HCT116 (cell line): ENCODE measurements at regions of chr22 and their contacts with region 1.

Region 1: GRCh38 chr22:37933711-37934376 is 19.6 kb downstream of the C22orf23 start:
- DNase-seq: peak; percentile 83
- ATAC-seq: peak; percentile 96
- H3K4me3 ChIP-seq: peak overlapping the region in 1 of 2 experiments; percentile 9; a peak in 1 of 4 replicates
- H3K27ac ChIP-seq: peak overlapping the region; percentile 78
- H3K4me1 ChIP-seq: peaks cover 13 to 18% of the 10 kb centered on the region in 2 experiments
- H3K27me3 ChIP-seq: no peaks in the 10 kb centered on the region
- CTCF ChIP-seq: peak; percentile 95 to 99 (median 97)
- POLR2A ChIP-seq: no peak
- RAD21 ChIP-seq: peak; percentile 78

Region 2: DNA sequence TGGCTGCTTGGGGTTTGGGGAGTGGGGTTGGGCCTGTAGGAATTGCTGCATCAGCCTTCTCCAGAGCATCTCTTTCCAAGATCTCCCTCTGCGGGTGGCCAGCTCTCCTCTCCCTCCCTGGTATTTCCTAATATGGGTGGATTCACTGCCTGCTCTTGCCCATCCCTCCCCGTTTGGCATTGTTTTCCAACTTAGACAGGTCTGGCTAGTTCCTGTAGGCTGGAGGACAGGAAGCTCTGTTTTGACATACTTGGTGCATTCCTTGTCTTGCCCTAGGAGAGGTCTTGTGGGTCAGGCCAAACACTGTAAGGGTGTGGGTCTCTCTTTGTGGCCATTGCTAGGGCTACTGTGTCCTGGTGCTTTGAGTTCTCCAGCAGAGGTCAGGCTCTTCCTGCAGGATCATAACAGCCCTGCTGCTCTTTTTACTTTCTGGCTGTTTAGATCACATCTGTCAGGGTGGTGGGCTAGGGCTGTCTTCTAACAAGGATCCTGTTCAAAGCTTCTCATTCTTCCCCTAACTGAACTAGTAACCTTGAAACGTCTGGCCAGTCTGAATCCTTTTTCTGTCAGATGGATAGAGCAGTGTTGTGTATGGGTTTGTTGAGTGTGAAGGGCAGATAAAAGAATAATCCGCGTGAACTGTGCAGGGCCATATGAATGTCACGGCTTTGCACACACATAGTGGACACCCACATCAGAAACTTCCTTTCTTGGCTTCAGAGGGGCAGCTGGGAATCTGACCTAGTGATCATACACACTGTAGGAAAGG is 46.0 kb before region 1 on chr22:
- CTCF ChIA-PET with region 1: interaction called, 3 read pairs
- POLR2A ChIA-PET with region 1: no interaction called
- RAD21 ChIA-PET with region 1: no interaction called
- intact Hi-C with region 1: loop called (anchors 10 kb)
- DNase-seq: no peak
- ATAC-seq: peak; percentile 58; the same call in 1 of the 2 replicates
- H3K4me3 ChIP-seq: no peak overlapping the region
- H3K27ac ChIP-seq: no peak overlapping the region
- H3K4me1 ChIP-seq: peaks cover under 1 to 4% of the 10 kb centered on the region in 2 experiments; a peak in 1 of 4 replicates
- H3K27me3 ChIP-seq: no peaks in the 10 kb centered on the region
- CTCF ChIP-seq: peak; percentile 39 to 44 (median 42); a peak in 5 of 6 replicates
- POLR2A ChIP-seq: no peak
- RAD21 ChIP-seq: peak; percentile 64

Region 3: DNA sequence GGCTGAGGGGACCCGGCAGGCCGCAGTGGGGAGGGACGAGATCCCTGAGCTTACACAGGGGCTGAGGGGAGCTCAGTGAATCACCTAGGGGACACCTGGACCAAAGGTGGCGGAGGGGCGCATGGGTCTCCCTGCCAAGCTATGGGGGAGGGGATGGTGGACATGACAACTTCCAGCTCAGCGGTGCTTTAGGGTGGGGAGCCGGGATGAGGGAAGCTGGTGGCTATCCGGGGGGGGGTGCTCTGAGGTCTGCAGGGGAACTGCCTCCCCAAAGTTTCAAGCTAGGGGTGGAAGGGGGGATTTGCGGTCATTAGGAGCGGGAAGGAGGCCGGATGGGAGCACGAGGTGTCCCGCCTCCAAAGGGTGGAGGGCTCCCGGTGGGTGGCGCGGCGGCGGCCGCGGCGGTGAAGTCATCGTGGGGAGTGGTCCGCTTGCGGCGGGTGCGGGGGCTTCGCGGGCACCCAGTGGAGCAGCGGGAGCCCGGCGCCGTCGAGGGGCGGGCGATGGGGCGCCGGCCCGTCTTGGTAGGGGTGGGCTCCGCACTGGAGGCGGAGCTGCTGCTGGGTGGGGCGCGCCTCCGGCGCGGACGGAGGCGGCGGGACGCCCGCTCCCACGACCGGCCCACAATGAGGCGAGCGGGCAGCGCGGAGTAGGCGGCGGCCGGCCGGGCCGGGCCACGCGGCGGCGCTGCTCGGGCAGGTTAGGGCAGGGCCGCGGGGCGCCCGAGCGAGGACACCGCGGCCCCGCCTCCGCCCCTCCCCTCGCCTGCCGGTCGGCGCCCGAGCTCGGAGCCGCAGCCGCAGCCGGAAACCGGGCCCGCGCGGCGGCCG is 28.1 kb before region 1 on chr22 and contains the start of gene MICALL1:
- CTCF ChIA-PET with region 1: no interaction called
- POLR2A ChIA-PET with region 1: no interaction called
- RAD21 ChIA-PET with region 1: no interaction called
- intact Hi-C with region 1: loop called (anchors 1 kb)
- DNase-seq: no peak
- ATAC-seq: peak; percentile 87
- H3K4me3 ChIP-seq: peak within 1 kb of the TSS; percentile 62 to 86
- H3K27ac ChIP-seq: peak within 1 kb of the TSS; percentile 96
- H3K4me1 ChIP-seq: peaks cover 22 to 32% of the 10 kb centered on the region in 2 experiments
- H3K27me3 ChIP-seq: no peaks in the 10 kb centered on the region
- CTCF ChIP-seq: no peak
- POLR2A ChIP-seq: no peak
- RAD21 ChIP-seq: no peak
- total RNA-seq, gene MICALL1: 35.2 TPM

Region 4: GRCh38 chr22:37953437-37954179 is 19.8 kb after region 1 on chr22 and contains the starts of genes C22orf23 and POLR2F:
- CTCF ChIA-PET with region 1: interaction called, 13 read pairs
- POLR2A ChIA-PET with region 1: no interaction called
- RAD21 ChIA-PET with region 1: no interaction called
- intact Hi-C with region 1: no loop called
- DNase-seq: peak; percentile 86
- ATAC-seq: peak; percentile 95
- H3K4me3 ChIP-seq: peak within 1 kb of the TSS; percentile 99
- H3K27ac ChIP-seq: peak within 1 kb of the TSS; percentile 63
- H3K4me1 ChIP-seq: peaks cover 7 to 17% of the 10 kb centered on the region in 2 experiments; a peak in 3 of 4 replicates
- H3K27me3 ChIP-seq: no peaks in the 10 kb centered on the region
- CTCF ChIP-seq: no peak
- POLR2A ChIP-seq: peak; percentile 56
- RAD21 ChIP-seq: no peak
- total RNA-seq, gene C22orf23: 0.47 TPM
- total RNA-seq, gene POLR2F: 107 TPM

Region 5: DNA sequence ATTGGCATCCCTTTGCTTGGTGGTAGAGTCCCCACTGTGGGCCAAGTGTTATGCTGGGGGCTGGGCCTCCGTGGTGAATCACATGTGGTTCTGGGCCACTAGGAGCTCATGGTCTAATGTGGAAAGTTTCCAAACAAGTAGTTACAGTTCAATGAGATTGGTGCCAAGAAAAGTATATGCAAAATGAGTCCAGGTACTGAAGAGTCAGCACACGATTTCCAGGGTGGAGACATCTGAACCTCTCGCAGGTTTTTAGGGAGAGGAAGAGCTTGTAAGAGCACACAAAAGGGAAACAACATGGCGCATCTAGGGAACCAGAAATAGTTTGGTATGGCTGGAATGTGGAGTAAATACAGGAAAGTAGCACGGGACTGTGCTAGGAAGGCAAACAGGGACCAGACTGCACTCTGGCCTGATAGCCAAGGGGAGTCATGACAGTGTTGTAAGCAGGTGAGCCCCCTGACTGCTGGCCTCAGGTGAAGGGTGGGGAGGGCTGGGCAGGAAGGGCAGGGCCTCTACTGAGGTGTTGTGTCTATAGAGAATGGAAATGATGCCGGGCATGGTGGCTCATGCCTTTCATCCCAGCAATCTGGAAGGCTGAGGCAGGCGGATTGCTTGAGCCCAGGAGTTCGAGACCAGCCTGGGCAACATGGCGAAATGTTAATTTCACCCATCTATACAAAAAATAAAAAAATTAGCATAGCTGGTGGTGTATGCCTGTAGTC is 32.3 kb after region 1 on chr22:
- CTCF ChIA-PET with region 1: interaction called, 3 read pairs
- POLR2A ChIA-PET with region 1: no interaction called
- RAD21 ChIA-PET with region 1: no interaction called
- intact Hi-C with region 1: loop called (anchors 2 kb)
- DNase-seq: no peak
- ATAC-seq: no peak
- H3K4me3 ChIP-seq: no peak overlapping the region
- H3K27ac ChIP-seq: no peak overlapping the region
- H3K4me1 ChIP-seq: peaks cover 0 to 11% of the 10 kb centered on the region in 2 experiments; a peak in 2 of 4 replicates
- H3K27me3 ChIP-seq: no peaks in the 10 kb centered on the region
- CTCF ChIP-seq: no peak
- POLR2A ChIP-seq: no peak
- RAD21 ChIP-seq: no peak

Region 6: DNA sequence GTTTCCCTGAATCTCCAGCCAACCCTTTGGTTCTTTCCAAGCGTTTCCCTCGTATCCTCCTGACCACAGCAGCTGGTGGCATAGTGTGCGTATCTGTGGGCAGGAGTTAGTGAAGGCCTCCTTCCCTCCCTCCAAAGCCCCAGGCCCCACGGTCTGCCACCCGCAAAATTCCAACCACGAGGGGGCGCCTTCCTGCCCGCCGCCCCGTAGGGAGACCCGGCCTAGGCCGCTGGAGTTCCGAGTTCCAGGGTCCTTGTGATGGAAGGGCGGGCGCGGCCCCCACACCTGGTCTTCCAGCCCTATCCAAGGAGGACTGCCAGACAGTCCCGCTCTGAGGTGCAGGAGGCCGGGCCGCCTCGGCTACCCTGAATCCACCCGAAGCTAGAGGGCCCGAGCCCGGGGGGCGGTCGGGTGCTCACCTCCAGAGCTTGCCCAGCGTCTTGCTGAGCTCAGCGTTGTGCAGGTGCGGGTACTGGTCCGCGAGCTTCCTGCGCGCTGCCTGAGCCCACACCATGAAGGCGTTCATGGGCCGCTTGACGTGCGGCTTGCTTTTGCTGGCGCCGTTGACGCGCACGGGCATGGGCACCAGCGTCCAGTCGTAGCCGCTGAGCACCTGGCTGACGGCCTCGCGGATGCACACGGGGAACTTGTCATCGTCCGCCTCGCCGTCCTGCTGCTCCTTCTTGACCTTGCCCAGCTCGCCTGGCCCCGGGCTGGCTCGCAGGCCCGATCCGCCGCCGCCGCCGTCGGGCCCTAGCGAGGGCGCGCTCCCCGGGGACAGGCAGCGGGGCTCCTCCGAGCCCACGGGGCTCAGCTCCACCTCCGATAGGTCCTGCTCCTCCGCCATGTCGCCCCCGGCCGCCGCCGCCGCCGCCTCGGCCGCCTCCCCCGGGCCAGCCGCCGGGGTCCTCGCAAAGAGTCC is 49.4 kb after region 1 on chr22:
- CTCF ChIA-PET with region 1: no interaction called
- POLR2A ChIA-PET with region 1: no interaction called
- RAD21 ChIA-PET with region 1: no interaction called
- intact Hi-C with region 1: no loop called
- DNase-seq: no peak
- ATAC-seq: peak; percentile 56; the same call in 1 of the 2 replicates
- H3K4me3 ChIP-seq: no peak overlapping the region
- H3K27ac ChIP-seq: no peak overlapping the region
- H3K4me1 ChIP-seq: no peaks in the 10 kb centered on the region
- H3K27me3 ChIP-seq: no peaks in the 10 kb centered on the region
- CTCF ChIP-seq: peak in 2 of 3 experiments; percentile 31 to 45; a peak in 3 of 6 replicates
- POLR2A ChIP-seq: no peak
- RAD21 ChIP-seq: no peak